ENCODE measurements at regions of chr9 and their contacts with region 1.

Region 1: GRCh38 chr9:21381448-21382339 is 3.5 kb downstream of the IFNA2 start:
- DNase-seq: peak; percentile 94
- ATAC-seq: peak; percentile 92
- H3K4me3 ChIP-seq: peak overlapping the region; percentile 25; the same call in 1 of the 2 replicates
- H3K27ac ChIP-seq: peak overlapping the region; percentile 69
- H3K4me1 ChIP-seq: peaks cover 22% of the 10 kb centered on the region
- H3K27me3 ChIP-seq: no peaks in the 10 kb centered on the region
- CTCF ChIP-seq: no peak
- EP300 ChIP-seq: peak; percentile 92 to 93
- POLR2A ChIP-seq: no peak
- RAD21 ChIP-seq: 0 out of 2 replicates have a peak, but pooled peaks have one; percentile 6

Region 2: GRCh38 chr9:21357479-21358460 is 23.9 kb before region 1 on chr9:
- CTCF ChIA-PET with region 1: interaction called, 26 read pairs
- POLR2A ChIA-PET with region 1: interaction called, 4 read pairs
- RAD21 ChIA-PET with region 1: interaction called, 6 read pairs
- SMC1A ChIA-PET with region 1: interaction called, 24 read pairs
- in situ Hi-C with region 1: no loop called
- intact Hi-C with region 1: loop called (anchors 1 kb)
- DNase-seq: peak; percentile 76
- ATAC-seq: peak; percentile 94
- H3K4me3 ChIP-seq: no peak overlapping the region
- H3K27ac ChIP-seq: peak overlapping the region; percentile 45; the same call in 1 of the 2 replicates
- H3K4me1 ChIP-seq: peaks cover 18% of the 10 kb centered on the region; the same call in 1 of the 2 replicates
- H3K27me3 ChIP-seq: no peaks in the 10 kb centered on the region
- CTCF ChIP-seq: no peak
- EP300 ChIP-seq: peak in 1 of 2 experiments; percentile 62; a peak in 1 of 4 replicates
- POLR2A ChIP-seq: no peak
- RAD21 ChIP-seq: no peak

Region 3: DNA sequence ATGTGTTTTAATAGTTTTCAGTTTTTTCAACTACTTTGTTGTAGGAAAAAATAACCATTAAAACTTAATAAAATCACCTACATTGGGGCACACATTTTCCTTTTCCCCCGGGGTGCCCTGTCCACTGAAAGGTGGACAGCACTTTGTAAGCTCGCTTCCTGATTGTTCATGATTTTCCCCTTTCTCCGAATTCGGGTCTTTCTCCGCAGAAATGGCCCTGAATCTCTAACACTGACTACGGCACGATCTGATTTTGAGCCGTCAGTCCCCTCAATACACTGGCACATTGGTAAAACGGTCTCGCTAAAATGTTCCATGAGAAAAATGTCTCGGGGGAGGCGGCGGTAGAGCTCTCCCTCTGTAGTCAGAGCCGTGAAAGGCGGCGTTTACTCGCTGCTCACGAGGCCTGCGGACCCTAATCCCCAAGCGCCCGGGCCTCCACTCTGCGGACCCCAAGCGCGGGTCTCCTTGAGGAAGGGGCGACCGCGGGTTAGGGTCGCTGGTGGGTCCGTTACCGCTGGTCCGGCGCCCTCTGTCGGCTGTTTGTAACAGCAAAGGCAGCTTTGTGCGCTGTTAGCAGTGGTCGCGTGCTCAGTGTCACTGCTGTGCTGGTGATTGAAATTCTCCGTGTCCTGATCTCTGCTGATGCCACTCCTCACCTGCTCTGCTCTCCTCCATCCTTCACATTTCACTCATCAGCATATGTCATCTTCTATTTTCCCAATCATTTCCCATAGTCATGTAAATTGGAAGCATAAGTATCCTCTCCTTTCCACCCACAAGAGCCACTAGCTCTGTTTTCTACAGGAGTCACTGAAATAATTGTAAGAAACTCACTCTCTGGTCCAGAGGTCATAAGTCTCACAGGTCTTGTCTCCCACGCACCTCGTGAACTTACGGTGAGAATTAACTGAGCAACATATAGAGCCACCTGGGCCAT is 14.4 kb after region 1 on chr9:
- CTCF ChIA-PET with region 1: interaction called, 111 read pairs
- POLR2A ChIA-PET with region 1: interaction called, 3 read pairs
- RAD21 ChIA-PET with region 1: interaction called, 34 read pairs
- SMC1A ChIA-PET with region 1: interaction called, 35 read pairs
- in situ Hi-C with region 1: no loop called
- intact Hi-C with region 1: no loop called
- DNase-seq: no peak
- ATAC-seq: peak; percentile 82
- H3K4me3 ChIP-seq: peak overlapping the region; percentile 68
- H3K27ac ChIP-seq: no peak overlapping the region
- H3K4me1 ChIP-seq: peaks cover 3% of the 10 kb centered on the region; the same call in 1 of the 2 replicates
- H3K27me3 ChIP-seq: no peaks in the 10 kb centered on the region
- CTCF ChIP-seq: peak; percentile 71 to 88 (median 85)
- EP300 ChIP-seq: no peak
- POLR2A ChIP-seq: no peak
- RAD21 ChIP-seq: peak; percentile 57

Region 4: GRCh38 chr9:21413624-21414023 is 31.9 kb after region 1 on chr9:
- CTCF ChIA-PET with region 1: interaction called, 14 read pairs
- POLR2A ChIA-PET with region 1: no interaction called
- RAD21 ChIA-PET with region 1: no interaction called
- SMC1A ChIA-PET with region 1: interaction called, 4 read pairs
- in situ Hi-C with region 1: no loop called
- intact Hi-C with region 1: no loop called
- DNase-seq: no peak
- ATAC-seq: peak; percentile 96
- H3K4me3 ChIP-seq: no peak overlapping the region
- H3K27ac ChIP-seq: no peak overlapping the region
- H3K4me1 ChIP-seq: peaks cover 6% of the 10 kb centered on the region; the same call in 1 of the 2 replicates
- H3K27me3 ChIP-seq: no peaks in the 10 kb centered on the region; a peak in 1 of 4 replicates
- CTCF ChIP-seq: peak; percentile 50 to 70 (median 69); a peak in 5 of 6 replicates
- EP300 ChIP-seq: no peak
- POLR2A ChIP-seq: no peak
- RAD21 ChIP-seq: peak; percentile 55